HCT116 (cell line): ENCODE measurements at regions of chr5 and their contacts with region 1.

Region 1: GRCh38 chr5:78430866-78431265 is 70.4 kb downstream of the SCAMP1 start:
- DNase-seq: no peak
- ATAC-seq: no peak
- H3K4me3 ChIP-seq: no peak overlapping the region
- H3K27ac ChIP-seq: no peak overlapping the region
- H3K4me1 ChIP-seq: no peaks in the 10 kb centered on the region
- H3K27me3 ChIP-seq: no peaks in the 10 kb centered on the region
- CTCF ChIP-seq: no peak
- POLR2A ChIP-seq: no peak
- RAD21 ChIP-seq: no peak

Region 2: DNA sequence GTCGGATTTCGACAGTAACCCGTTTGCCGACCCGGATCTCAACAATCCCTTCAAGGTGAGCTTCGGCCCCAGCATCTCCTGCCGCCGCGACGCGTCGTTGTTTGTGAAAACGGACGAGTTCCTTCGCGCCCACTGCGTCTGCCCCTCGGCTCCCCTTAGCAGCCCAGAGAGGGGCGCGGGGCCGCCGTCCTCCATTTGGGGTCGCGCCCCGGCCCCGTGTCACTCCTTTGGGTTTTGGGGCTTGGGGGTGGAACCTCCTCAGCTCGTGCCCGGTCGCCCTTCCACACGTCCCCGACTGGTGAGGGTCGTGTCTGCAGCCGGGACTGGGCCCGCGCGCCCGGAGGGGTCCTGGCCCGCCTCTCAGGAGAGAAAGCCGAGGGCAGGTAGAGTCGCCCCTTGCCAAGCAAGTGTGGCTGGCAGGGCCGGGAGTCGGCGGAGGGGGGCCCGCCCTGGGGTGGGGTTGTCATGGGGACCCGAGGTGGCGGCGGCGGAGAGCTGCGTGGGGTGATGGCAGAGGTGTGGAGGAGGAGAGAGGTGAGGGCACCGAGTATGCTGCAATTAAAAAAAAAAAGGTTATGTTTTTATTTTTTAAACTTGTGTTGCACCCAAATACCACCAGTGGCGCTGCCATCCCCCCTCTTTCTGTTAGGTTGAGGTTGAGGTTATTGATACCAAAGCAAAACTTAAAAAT is 70.0 kb before region 1 on chr5:
- CTCF ChIA-PET with region 1: no interaction called
- POLR2A ChIA-PET with region 1: no interaction called
- RAD21 ChIA-PET with region 1: no interaction called
- intact Hi-C with region 1: no loop called
- DNase-seq: no peak
- ATAC-seq: peak; percentile 44
- H3K4me3 ChIP-seq: peak overlapping the region; percentile 92 to 94
- H3K27ac ChIP-seq: peak overlapping the region; percentile 93
- H3K4me1 ChIP-seq: peaks cover 9 to 13% of the 10 kb centered on the region in 2 experiments; a peak in 3 of 4 replicates
- H3K27me3 ChIP-seq: no peaks in the 10 kb centered on the region
- CTCF ChIP-seq: no peak
- POLR2A ChIP-seq: peak; percentile 26
- RAD21 ChIP-seq: no peak

Region 3: DNA sequence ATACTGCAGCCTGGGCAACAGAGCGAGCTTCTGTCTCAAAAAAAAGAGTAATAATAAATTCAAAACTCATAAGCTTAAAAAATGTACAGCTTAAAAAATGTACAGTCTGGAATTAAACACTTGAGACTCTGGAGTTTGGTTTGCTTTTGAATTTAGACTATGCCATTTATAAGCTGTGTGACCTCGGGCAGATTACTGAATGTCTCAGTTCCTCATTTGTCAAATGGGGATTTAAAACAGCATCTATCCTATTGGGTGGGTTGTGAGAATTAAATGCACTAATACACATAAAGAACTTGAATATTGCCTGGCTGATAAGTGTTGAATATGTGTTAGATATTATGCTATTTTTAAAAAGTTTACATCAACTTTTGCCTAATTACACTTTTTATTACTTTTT is 28.0 kb after region 1 on chr5:
- CTCF ChIA-PET with region 1: no interaction called
- POLR2A ChIA-PET with region 1: interaction called, 11 read pairs
- RAD21 ChIA-PET with region 1: no interaction called
- intact Hi-C with region 1: no loop called
- DNase-seq: no peak
- ATAC-seq: no peak
- H3K4me3 ChIP-seq: no peak overlapping the region
- H3K27ac ChIP-seq: no peak overlapping the region
- H3K4me1 ChIP-seq: no peaks in the 10 kb centered on the region
- H3K27me3 ChIP-seq: no peaks in the 10 kb centered on the region
- CTCF ChIP-seq: no peak
- POLR2A ChIP-seq: no peak
- RAD21 ChIP-seq: no peak